ENCODE measurements at regions of chr12 and their contacts with region 1.

Region 1: GRCh38 chr12:88141770-88142609 is at the starts of genes CEP290 and TMTC3:
- DNase-seq: peak; percentile 93
- H3K4me3 Mint-ChIP-seq: peak within 1 kb of the TSS; percentile 94
- H3K27ac Mint-ChIP-seq: peak within 1 kb of the TSS; percentile 91
- H3K4me1 Mint-ChIP-seq: peaks cover 34% of the 10 kb centered on the region
- H3K27me3 Mint-ChIP-seq: no peaks in the 10 kb centered on the region
- total RNA-seq, gene CEP290: 16.0 TPM in 2 replicates
- total RNA-seq, gene TMTC3: 7.2 and 8.1 TPM in 2 replicates

Region 2: GRCh38 chr12:88035271-88035906 is 106.6 kb before region 1 on chr12:
- intact Hi-C with region 1: loop called (anchors 1 kb)
- DNase-seq: peak; percentile 84
- H3K4me3 Mint-ChIP-seq: peak overlapping the region; percentile 99
- H3K27ac Mint-ChIP-seq: peak overlapping the region; percentile 95
- H3K4me1 Mint-ChIP-seq: peaks cover 45% of the 10 kb centered on the region
- H3K27me3 Mint-ChIP-seq: no peaks in the 10 kb centered on the region

Region 3: GRCh38 chr12:88235183-88235833 is 93.3 kb after region 1 on chr12:
- intact Hi-C with region 1: loop called (anchors 1 kb)
- DNase-seq: no peak
- H3K4me3 Mint-ChIP-seq: no peak overlapping the region
- H3K27ac Mint-ChIP-seq: peak overlapping the region; percentile 34
- H3K4me1 Mint-ChIP-seq: peaks cover 30% of the 10 kb centered on the region
- H3K27me3 Mint-ChIP-seq: no peaks in the 10 kb centered on the region

Region 4: DNA sequence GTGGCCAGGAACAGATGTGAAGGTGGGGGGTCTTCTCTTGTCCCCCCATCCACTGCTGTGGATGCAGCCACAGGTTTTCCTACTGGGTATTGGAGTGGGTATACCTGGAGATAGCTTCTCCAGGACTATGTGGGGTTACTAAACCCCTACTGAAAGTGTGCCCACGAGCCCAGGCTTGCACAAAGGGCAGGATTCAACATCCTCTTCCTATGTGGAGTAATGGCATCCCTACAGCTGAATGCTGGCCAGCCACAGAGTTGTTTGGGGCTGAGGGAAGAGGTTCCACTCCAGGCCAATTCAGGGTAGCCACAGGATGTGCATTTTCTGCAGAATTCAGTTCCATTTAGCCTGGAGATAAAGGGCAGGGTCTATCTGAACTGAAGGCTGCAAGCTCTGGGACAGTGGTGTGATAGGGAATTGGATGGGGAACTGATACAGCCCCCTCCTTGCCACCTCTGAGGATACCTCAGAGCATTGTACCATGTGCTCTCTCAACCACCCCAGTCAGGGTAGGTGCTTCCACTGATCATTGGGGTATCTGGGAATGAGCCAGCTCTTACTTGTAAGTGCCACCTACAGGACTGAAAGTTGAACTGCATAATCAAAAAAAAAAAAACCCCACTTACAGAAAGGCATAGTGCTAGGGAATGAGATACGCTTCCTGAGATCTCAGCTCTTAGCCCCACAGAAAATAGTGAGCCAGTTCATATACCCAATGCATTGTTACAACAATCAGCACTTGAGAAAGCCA is 251.2 kb after region 1 on chr12:
- intact Hi-C with region 1: loop called (anchors 2 kb)
- DNase-seq: no peak
- H3K4me3 Mint-ChIP-seq: no peak overlapping the region
- H3K27ac Mint-ChIP-seq: no peak overlapping the region
- H3K4me1 Mint-ChIP-seq: peaks cover 36% of the 10 kb centered on the region
- H3K27me3 Mint-ChIP-seq: peaks cover 4% of the 10 kb centered on the region

Region 5: DNA sequence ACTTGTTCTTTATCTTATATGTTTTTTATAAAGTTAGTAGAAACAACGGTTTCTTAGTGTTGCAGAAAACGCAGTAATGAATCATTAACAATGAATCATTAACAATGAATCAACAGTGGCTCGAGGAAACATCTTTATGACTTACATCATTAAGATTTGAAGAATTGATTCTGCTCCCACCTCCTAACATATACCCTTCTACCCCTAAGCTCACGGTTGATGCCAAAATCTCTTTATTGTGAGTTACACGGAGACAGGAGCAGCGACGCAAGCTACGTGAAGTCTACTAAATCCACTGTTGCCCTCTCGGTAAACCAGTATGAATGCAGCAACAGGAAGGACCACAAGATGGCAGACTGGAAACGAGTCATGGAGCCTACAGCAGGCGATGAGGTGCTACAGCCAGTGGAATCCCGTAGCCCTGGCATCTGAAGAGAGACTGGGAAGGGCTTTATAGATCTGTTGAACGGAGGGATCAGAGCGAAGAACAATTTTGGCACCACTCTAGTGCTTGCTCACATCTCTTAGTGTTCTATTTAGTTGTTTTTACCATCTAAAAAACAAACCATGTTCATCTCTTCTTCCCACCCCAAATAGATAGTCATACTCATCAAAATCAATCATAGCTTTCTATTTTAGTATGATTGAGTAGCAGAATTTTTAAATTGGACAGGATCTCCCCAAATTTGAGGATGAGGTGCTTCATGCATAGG is 877.6 kb after region 1 on chr12:
- intact Hi-C with region 1: loop called (anchors 10 kb)
- DNase-seq: peak; percentile 75
- H3K4me3 Mint-ChIP-seq: no peak overlapping the region
- H3K27ac Mint-ChIP-seq: no peak overlapping the region
- H3K4me1 Mint-ChIP-seq: peaks cover 27% of the 10 kb centered on the region
- H3K27me3 Mint-ChIP-seq: peaks cover 1% of the 10 kb centered on the region

Region 6: DNA sequence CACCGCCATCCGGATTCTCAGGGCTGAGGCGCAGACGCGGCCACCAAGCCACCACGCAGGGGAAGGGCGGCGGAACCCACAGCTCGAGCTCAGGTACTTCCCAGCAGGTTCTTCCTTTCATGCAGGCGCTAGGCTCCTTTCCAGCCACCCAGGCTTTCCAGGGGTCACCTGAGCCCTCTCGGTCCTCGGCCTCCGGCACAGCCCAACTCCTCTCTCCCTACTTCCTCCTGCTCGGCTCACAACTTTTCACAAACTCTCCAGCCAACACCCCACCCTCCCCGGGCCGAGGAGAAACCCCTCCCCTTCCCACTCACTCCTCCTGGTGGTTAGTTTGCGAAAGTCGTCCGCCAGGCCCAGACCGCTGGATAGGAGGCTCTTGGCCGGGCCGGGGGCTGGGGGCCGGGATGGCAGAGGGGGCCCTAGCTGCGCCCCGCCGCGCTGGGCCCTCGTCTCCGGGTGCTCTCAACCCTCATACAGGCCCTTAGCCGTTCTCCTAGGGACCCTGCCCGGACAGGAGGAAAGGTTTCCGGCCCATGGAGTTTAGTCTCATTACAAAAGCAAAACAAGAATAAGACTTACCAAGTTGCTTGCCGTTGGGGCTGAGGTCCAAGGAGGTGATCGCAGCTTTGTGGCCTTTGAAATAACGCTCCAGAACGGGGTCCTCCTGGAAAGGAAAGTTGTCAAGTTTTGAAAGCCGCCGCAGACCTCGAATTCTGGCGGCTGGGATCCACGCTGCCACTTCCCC is 1382.7 kb after region 1 on chr12 and contains the start of gene GALNT4:
- intact Hi-C with region 1: loop called (anchors 1 kb)
- DNase-seq: peak; percentile 75
- H3K4me3 Mint-ChIP-seq: peak within 1 kb of the TSS; percentile 99
- H3K27ac Mint-ChIP-seq: peak within 1 kb of the TSS; percentile 99
- H3K4me1 Mint-ChIP-seq: peaks cover 51% of the 10 kb centered on the region
- H3K27me3 Mint-ChIP-seq: no peaks in the 10 kb centered on the region
- total RNA-seq, gene GALNT4: 8.8 and 9.1 TPM in 2 replicates